ENCODE measurements at regions of chr11 and their contacts with region 1.

Region 1: GRCh38 chr11:44727373-44728287 is 868 bp downstream of the TSPAN18 start:
- DNase-seq: peak; percentile 57
- ATAC-seq: peak; percentile 93
- H3K4me3 ChIP-seq: peak overlapping the region; percentile 74 to 82
- H3K27ac ChIP-seq: peak overlapping the region; percentile 48; the same call in 1 of the 2 replicates
- H3K4me1 ChIP-seq: peaks cover 4 to 18% of the 10 kb centered on the region in 2 experiments; a peak in 3 of 4 replicates
- H3K27me3 ChIP-seq: no peaks in the 10 kb centered on the region
- CTCF ChIP-seq: peak; percentile 70 to 83 (median 76); a peak in 5 of 6 replicates
- POLR2A ChIP-seq: no peak
- RAD21 ChIP-seq: peak; percentile 77

Region 2: DNA sequence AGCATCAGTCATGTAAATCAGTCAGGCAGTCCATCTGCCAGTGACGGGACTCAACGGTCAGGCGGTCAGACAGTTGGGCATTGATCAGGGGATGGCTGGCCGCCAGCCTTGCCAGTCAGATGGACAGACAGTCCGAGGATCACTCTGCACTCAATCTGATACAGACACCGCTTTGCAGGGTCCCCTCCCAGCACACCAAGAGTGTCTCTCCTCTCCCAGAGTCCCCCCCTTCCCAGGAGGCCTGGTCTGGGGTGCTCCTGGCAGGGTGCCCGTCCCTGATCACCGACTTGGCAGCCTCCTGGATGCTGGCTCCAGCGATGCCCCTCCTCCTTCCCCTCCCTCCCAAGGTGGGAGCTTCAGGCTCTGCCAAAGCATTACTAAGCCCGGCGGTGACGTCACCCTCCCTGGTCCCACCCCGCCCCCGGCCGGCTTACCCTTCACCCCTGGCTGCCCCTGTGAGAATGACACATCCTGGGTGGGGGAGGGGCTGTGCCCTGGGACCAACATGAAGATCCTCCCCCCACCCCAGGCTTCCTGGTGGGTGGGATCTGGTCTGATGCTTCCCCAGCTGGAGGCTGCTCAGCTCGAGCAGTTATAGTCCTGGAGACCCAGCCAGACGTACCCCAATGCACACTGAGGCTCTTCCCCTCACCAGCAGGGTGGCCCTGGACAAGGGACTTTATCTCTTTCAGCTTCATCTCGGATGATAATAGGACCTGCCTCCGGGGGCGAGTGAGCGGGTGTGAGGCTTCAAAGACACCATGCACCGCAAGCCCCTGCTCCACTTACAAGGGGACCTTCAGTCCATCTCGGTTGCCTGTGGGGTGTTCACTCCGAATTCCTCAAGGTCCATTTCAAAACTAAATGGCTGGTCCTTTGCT is 93.0 kb before region 1 on chr11:
- CTCF ChIA-PET with region 1: interaction called, 3 read pairs
- POLR2A ChIA-PET with region 1: no interaction called
- RAD21 ChIA-PET with region 1: no interaction called
- intact Hi-C with region 1: loop called (anchors 5 kb)
- DNase-seq: peak; percentile 10
- ATAC-seq: peak; percentile 29
- H3K4me3 ChIP-seq: no peak overlapping the region
- H3K27ac ChIP-seq: no peak overlapping the region
- H3K4me1 ChIP-seq: peaks cover 2 to 24% of the 10 kb centered on the region in 2 experiments; a peak in 3 of 4 replicates
- H3K27me3 ChIP-seq: no peaks in the 10 kb centered on the region
- CTCF ChIP-seq: no peak
- POLR2A ChIP-seq: no peak
- RAD21 ChIP-seq: no peak

Region 3: GRCh38 chr11:44711108-44711786 is 16.4 kb before region 1 on chr11:
- CTCF ChIA-PET with region 1: no interaction called
- POLR2A ChIA-PET with region 1: no interaction called
- RAD21 ChIA-PET with region 1: no interaction called
- intact Hi-C with region 1: no loop called
- DNase-seq: no peak
- ATAC-seq: no peak
- H3K4me3 ChIP-seq: no peak overlapping the region
- H3K27ac ChIP-seq: no peak overlapping the region
- H3K4me1 ChIP-seq: peaks cover 17 to 35% of the 10 kb centered on the region in 2 experiments
- H3K27me3 ChIP-seq: no peaks in the 10 kb centered on the region
- CTCF ChIP-seq: no peak
- POLR2A ChIP-seq: no peak
- RAD21 ChIP-seq: no peak

Region 4: GRCh38 chr11:44743959-44744557 is 16.4 kb after region 1 on chr11:
- CTCF ChIA-PET with region 1: no interaction called
- POLR2A ChIA-PET with region 1: no interaction called
- RAD21 ChIA-PET with region 1: no interaction called
- intact Hi-C with region 1: no loop called
- DNase-seq: no peak
- ATAC-seq: no peak
- H3K4me3 ChIP-seq: no peak overlapping the region
- H3K27ac ChIP-seq: no peak overlapping the region
- H3K4me1 ChIP-seq: no peaks in the 10 kb centered on the region
- H3K27me3 ChIP-seq: no peaks in the 10 kb centered on the region
- CTCF ChIP-seq: no peak
- POLR2A ChIP-seq: no peak
- RAD21 ChIP-seq: no peak

Region 5: GRCh38 chr11:44775366-44775984 is 47.8 kb after region 1 on chr11:
- CTCF ChIA-PET with region 1: no interaction called
- POLR2A ChIA-PET with region 1: no interaction called
- RAD21 ChIA-PET with region 1: interaction called in 1 of 2 experiments, 3 read pairs
- intact Hi-C with region 1: loop called (anchors 1 kb)
- DNase-seq: peak; percentile 69
- ATAC-seq: peak; percentile 99
- H3K4me3 ChIP-seq: no peak overlapping the region
- H3K27ac ChIP-seq: no peak overlapping the region
- H3K4me1 ChIP-seq: no peaks in the 10 kb centered on the region
- H3K27me3 ChIP-seq: no peaks in the 10 kb centered on the region
- CTCF ChIP-seq: peak; percentile 77 to 94 (median 88)
- POLR2A ChIP-seq: no peak
- RAD21 ChIP-seq: peak; percentile 63

Region 6: GRCh38 chr11:44833877-44834452 is 106.3 kb after region 1 on chr11:
- CTCF ChIA-PET with region 1: no interaction called
- POLR2A ChIA-PET with region 1: no interaction called
- RAD21 ChIA-PET with region 1: no interaction called
- intact Hi-C with region 1: no loop called
- DNase-seq: no peak
- ATAC-seq: 0 out of 2 replicates have a peak, but pooled peaks have one; percentile 57
- H3K4me3 ChIP-seq: no peak overlapping the region
- H3K27ac ChIP-seq: no peak overlapping the region
- H3K4me1 ChIP-seq: peaks cover 13% of the 10 kb centered on the region in 2 experiments
- H3K27me3 ChIP-seq: no peaks in the 10 kb centered on the region
- CTCF ChIP-seq: no peak
- POLR2A ChIP-seq: no peak
- RAD21 ChIP-seq: no peak

Region 7: DNA sequence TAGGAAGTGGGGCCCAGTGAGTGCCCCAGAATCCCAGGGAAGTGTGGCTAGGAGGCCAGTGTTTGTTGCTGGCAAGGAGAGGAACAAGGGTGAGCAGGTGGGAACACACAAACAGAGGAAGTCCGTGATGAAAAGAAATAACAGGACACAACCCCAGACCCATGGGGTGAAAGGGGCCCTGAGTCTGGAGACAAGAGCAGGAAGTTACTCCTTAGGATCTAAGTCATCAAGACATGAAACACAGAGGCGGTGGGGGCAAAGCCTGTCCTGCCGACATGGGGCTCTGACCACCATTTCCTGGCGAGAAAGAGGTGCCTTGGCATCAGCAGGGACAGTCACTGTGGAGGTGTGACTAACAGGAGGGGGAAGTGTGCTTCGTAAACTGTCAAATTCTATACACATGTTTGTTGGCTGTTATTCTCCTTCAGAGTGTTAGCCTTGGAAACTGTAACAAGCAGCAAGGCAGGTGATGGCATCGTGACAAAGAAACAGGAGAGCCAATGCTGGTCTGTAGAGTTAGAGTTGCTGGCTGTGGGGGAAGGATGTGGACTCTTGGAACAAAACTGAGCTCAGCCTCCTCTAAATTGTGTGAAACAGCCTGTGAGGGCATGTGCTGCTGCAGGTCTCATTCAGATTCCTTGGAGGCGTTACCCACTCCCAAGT is 916.1 kb after region 1 on chr11:
- CTCF ChIA-PET with region 1: no interaction called
- POLR2A ChIA-PET with region 1: no interaction called
- RAD21 ChIA-PET with region 1: no interaction called
- intact Hi-C with region 1: no loop called
- DNase-seq: no peak
- ATAC-seq: no peak
- H3K4me3 ChIP-seq: no peak overlapping the region
- H3K27ac ChIP-seq: no peak overlapping the region
- H3K4me1 ChIP-seq: no peaks in the 10 kb centered on the region
- H3K27me3 ChIP-seq: peaks cover 29% of the 10 kb centered on the region
- CTCF ChIP-seq: no peak
- POLR2A ChIP-seq: no peak
- RAD21 ChIP-seq: no peak